ENCODE measurements at regions of chr6 and their contacts with region 1.

Region 1: GRCh38 chr6:9896806-9897205 is 518.1 kb downstream of the TFAP2A start:
- DNase-seq: no peak
- H3K4me3 ChIP-seq: no peak overlapping the region
- H3K27ac ChIP-seq: no peak overlapping the region
- H3K27me3 ChIP-seq: no peaks in the 10 kb centered on the region
- CTCF ChIP-seq: no peak

Region 2: DNA sequence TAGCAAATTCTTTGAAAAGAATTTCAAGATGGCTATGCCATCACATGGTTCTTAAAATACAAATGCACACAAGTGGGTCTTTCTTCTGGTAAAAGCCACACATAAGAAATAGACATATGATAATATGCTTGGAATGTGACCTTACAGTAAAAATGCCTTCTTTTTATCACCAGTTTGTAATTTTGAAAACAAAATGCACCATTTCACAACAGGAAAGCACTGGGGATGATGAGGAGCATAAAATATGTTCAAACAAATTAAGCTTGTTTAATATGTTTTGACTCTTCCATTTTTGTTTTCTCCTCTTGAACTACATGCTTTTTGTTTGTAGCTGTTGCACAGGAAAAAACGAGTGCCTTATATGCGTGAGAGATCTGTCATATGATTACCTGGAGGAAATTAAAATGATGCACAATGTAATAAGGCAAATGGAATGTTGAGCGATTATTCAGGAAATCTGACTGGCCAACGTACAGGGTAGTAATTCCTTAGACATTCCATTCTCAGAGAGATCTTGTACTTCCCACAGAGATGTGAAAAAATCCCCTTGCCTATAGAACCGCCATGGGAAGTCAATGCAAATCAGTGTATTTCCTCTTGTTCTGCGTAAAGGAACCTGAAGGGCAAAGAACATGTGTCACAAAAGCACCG is 393.6 kb before region 1 on chr6:
- CTCF ChIA-PET with region 1: no interaction called
- POLR2A ChIA-PET with region 1: interaction called, 11 read pairs
- DNase-seq: peak; percentile 50
- H3K4me3 ChIP-seq: no peak overlapping the region
- H3K27ac ChIP-seq: no peak overlapping the region
- H3K27me3 ChIP-seq: no peaks in the 10 kb centered on the region
- CTCF ChIP-seq: no peak

Measured in AG04450 (cell line).